PC-3 (cell line): ENCODE measurements at regions of chr4 and their contacts with region 1.

Region 1: DNA sequence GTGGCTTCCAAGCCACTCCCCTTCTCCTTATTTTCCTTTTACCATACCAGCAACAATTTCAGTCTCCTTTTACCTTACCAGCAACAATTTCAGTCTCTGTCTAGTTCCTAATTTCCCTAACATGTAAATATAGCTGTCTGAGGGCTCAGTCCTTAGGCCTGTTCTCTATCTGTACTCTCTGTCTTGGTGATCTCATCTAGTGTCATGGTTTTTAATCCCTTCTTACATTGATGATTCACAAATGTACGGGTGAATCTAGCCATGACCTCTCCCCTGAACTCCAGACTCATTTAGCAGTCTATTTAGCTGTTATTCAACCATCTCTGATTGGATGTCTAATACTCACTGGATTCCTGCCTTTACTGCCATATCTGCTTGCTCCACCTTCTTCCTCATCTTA is 7.2 kb downstream of the IL15 start:
- DNase-seq: peak; percentile 92
- ATAC-seq: peak; percentile 78
- H3K4me3 ChIP-seq: peak overlapping the region; percentile 48
- H3K27ac ChIP-seq: peak overlapping the region; percentile 92
- H3K4me1 ChIP-seq: peaks cover 40% of the 10 kb centered on the region
- H3K27me3 ChIP-seq: no peaks in the 10 kb centered on the region
- CTCF ChIP-seq: no peak

Region 2: GRCh38 chr4:141448490-141448889 is 195.1 kb before region 1 on chr4:
- CTCF ChIA-PET with region 1: no interaction called
- POLR2A ChIA-PET with region 1: no interaction called
- intact Hi-C with region 1: loop called (anchors 5 kb)
- DNase-seq: peak; percentile 30
- ATAC-seq: peak; percentile 80
- H3K4me3 ChIP-seq: no peak overlapping the region
- H3K27ac ChIP-seq: no peak overlapping the region
- H3K4me1 ChIP-seq: no peaks in the 10 kb centered on the region
- H3K27me3 ChIP-seq: no peaks in the 10 kb centered on the region
- CTCF ChIP-seq: no peak

Region 3: GRCh38 chr4:141684785-141685184 is 41.2 kb after region 1 on chr4:
- CTCF ChIA-PET with region 1: interaction called, 3 read pairs
- POLR2A ChIA-PET with region 1: no interaction called
- intact Hi-C with region 1: loop called (anchors 2 kb)
- DNase-seq: peak; percentile 80
- ATAC-seq: peak; percentile 72
- H3K4me3 ChIP-seq: no peak overlapping the region
- H3K27ac ChIP-seq: peak overlapping the region; percentile 68
- H3K4me1 ChIP-seq: peaks cover 40% of the 10 kb centered on the region
- H3K27me3 ChIP-seq: no peaks in the 10 kb centered on the region
- CTCF ChIP-seq: no peak

Region 4: GRCh38 chr4:141860974-141861373 is 217.4 kb after region 1 on chr4:
- CTCF ChIA-PET with region 1: no interaction called
- POLR2A ChIA-PET with region 1: no interaction called
- intact Hi-C with region 1: loop called (anchors 2 kb)
- DNase-seq: peak; percentile 61
- ATAC-seq: peak; percentile 45
- H3K4me3 ChIP-seq: no peak overlapping the region
- H3K27ac ChIP-seq: no peak overlapping the region
- H3K4me1 ChIP-seq: peaks cover 20% of the 10 kb centered on the region
- H3K27me3 ChIP-seq: no peaks in the 10 kb centered on the region
- CTCF ChIP-seq: peak; percentile 81

Region 5: GRCh38 chr4:141922236-141922635 is 278.7 kb after region 1 on chr4:
- CTCF ChIA-PET with region 1: no interaction called
- POLR2A ChIA-PET with region 1: no interaction called
- intact Hi-C with region 1: no loop called
- DNase-seq: no peak
- ATAC-seq: no peak
- H3K4me3 ChIP-seq: no peak overlapping the region
- H3K27ac ChIP-seq: no peak overlapping the region
- H3K4me1 ChIP-seq: no peaks in the 10 kb centered on the region
- H3K27me3 ChIP-seq: no peaks in the 10 kb centered on the region
- CTCF ChIP-seq: no peak